ENCODE measurements at regions of chr17 and their contacts with region 1.

Region 1: DNA sequence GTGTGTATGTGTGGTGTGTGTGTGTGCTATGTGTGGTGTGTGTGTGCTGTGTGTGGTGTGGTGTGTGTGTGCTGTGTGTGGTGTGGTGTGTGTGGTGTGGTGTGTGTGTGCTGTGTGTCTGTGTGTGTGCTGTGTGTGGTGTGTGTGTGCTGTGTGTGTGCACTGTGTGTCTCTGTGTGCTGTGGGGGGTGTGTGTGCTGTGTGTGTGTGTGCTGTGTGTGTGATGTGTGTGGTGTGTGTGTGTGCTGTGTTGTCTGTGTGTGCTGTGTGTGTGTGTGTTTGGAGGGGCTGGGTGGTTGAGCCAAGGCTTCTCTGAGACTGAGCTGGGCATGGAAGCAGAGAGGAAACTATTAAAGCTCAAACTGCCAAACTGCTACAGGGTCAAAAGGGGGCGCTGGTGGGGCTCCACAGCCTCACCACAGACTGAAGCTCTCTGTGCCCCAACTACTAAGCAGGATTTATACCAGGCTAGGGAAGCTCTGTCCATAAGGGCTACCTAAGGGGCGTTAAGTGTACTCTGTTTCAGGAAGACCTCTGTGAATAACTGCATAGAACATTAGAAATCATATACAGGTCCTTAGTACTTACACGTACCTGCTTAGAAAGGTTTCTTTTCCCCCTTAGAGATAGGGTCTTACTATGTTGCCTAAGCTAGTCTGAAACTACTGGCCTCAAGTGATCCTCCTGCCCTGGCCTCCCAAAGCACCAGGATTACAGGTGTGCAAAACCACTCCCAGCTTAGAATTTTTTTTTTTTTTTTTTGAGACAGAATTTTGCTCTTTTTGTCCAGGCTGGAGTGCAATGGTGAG is 27.8 kb upstream of the GHDC start:
- DNase-seq: peak; percentile 70

Region 2: DNA sequence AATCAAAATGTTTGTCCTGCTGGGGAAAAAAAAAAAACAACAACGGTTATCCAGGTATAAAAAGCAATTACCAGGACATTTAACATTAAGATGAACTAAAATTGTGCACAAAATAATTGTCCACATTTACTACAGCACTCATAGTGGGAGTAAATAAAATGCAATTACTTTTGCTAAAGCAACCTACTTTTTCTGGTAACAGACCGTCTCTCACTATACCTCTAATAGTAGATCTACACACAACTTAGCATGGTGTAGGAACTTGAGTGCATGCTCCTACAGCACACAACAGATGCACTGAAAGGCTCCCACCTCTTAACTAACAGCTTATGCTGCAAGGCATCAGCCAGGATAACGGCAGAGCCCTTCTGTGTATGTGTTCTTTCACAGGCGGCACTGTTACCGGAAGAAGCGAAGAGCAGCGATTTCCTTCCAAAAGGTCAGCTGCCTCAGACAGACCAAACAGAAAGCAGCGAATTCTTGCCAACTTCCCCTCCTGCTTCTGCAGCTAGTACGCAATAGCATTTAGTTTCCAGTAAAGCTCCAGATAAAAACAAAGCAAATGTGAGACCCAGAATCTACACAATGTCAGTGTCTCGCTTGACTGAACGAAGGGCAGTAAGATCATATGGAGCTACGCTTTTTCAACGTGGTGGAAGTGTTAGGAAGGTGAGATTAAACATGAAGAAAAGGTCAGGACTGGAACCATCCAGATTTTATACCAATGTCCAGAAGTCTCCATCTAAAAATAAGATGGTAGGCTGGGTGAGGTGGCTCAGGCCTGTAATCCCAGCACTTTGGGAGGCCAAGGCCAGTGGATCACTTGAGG is 26.4 kb after region 1 on chr17:
- CTCF ChIA-PET with region 1: interaction called, 13 read pairs
- POLR2A ChIA-PET with region 1: no interaction called
- DNase-seq: no peak

Region 3: GRCh38 chr17:42388381-42389134 is 166.4 kb after region 1 on chr17 and contains the start of gene STAT3:
- CTCF ChIA-PET with region 1: no interaction called
- POLR2A ChIA-PET with region 1: no interaction called
- DNase-seq: peak; percentile 100

Measured in HEK293T (cell line).